WTC11 (cell line): ENCODE measurements at regions of chr4 and their contacts with region 1.

Region 1: GRCh38 chr4:63563288-63564014 is 845.8 kb downstream of the TECRL start:
- DNase-seq: peak; percentile 20
- ATAC-seq: peak; percentile 78
- H3K4me3 Mint-ChIP-seq: no peak overlapping the region
- H3K27ac Mint-ChIP-seq: no peak overlapping the region
- H3K4me1 Mint-ChIP-seq: no peaks in the 10 kb centered on the region
- H3K27me3 Mint-ChIP-seq: no peaks in the 10 kb centered on the region
- CTCF ChIP-seq: no peak

Region 2: GRCh38 chr4:63296773-63297172 is 266.7 kb before region 1 on chr4:
- CTCF ChIA-PET with region 1: interaction called, 27 read pairs
- POLR2A ChIA-PET with region 1: no interaction called
- DNase-seq: peak; percentile 24
- ATAC-seq: no peak
- H3K4me3 Mint-ChIP-seq: no peak overlapping the region
- H3K27ac Mint-ChIP-seq: no peak overlapping the region
- H3K4me1 Mint-ChIP-seq: no peaks in the 10 kb centered on the region
- H3K27me3 Mint-ChIP-seq: no peaks in the 10 kb centered on the region
- CTCF ChIP-seq: no peak

Region 3: GRCh38 chr4:63528256-63528991 is 35.0 kb before region 1 on chr4:
- CTCF ChIA-PET with region 1: interaction called, 11 read pairs
- POLR2A ChIA-PET with region 1: no interaction called
- DNase-seq: no peak
- ATAC-seq: no peak
- H3K4me3 Mint-ChIP-seq: no peak overlapping the region
- H3K27ac Mint-ChIP-seq: no peak overlapping the region
- H3K4me1 Mint-ChIP-seq: no peaks in the 10 kb centered on the region
- H3K27me3 Mint-ChIP-seq: no peaks in the 10 kb centered on the region
- CTCF ChIP-seq: no peak